ENCODE measurements at regions of chr12 and their contacts with region 1.

Region 1: GRCh38 chr12:11040162-11040561 is 9.0 kb upstream of the TAS2R31 start:
- DNase-seq: no peak
- H3K4me3 ChIP-seq: no peak overlapping the region
- H3K27ac ChIP-seq: no peak overlapping the region
- H3K4me1 ChIP-seq: peaks cover 0 to 4% (median 0%) of the 10 kb centered on the region in 4 donors
- H3K27me3 ChIP-seq: no peaks in the 10 kb centered on the region
- CTCF ChIP-seq: no peak
- EP300 ChIP-seq: no peak
- POLR2A ChIP-seq: no peak

Region 2: DNA sequence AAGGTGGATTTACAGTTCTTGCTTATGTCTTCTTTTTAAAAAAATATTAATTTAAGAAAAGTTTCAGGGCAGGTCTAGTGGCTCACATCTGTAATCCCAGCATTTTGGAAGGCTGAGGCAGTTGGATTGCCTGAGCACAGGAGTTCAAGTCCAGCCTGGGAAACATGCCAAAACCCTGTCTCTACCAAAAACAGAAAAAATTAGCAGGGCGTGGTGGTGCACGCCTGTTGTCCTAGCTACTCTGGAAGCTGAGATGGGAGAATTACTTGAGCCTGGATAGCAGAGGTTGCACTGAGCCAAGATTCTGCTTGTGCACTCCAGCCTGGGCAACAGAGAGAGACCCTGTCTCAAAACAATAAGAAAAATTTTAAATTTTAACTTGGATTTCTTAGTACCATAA is 27.4 kb after region 1 on chr12:
- intact Hi-C with region 1: loop called (anchors 1 kb)
- DNase-seq: no peak
- H3K4me3 ChIP-seq: no peak overlapping the region
- H3K27ac ChIP-seq: no peak overlapping the region
- H3K4me1 ChIP-seq: peaks cover 0 to 8% (median 6%) of the 10 kb centered on the region in 4 donors
- H3K27me3 ChIP-seq: no peaks in the 10 kb centered on the region
- CTCF ChIP-seq: no peak
- EP300 ChIP-seq: no peak
- POLR2A ChIP-seq: no peak

Region 3: DNA sequence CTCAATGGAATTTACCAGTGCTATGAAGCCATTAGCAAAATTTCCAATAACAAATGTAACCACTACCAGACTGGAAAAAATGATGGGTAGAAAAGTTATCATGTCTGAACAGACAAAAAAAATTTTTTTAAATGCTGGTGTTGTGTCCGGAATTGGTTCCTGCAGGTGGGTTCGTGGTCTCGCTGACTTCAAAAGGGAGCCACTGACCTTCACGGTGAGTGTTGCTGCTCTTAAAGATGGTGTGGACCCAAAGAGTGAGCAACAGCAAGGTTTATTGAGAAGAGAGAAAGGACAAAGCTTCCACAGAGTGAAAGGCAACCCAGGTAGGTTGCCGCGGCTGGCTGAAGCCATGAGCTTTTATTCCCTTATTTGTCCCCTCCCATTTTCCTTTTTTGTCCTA is 52.0 kb after region 1 on chr12 and contains the start of gene TAS2R43:
- intact Hi-C with region 1: loop called (anchors 2 kb)
- DNase-seq: no peak
- H3K4me3 ChIP-seq: no peak within 1 kb of the TSS
- H3K27ac ChIP-seq: no peak within 1 kb of the TSS
- H3K4me1 ChIP-seq: no peaks in the 10 kb centered on the region
- H3K27me3 ChIP-seq: no peaks in the 10 kb centered on the region
- CTCF ChIP-seq: no peak
- EP300 ChIP-seq: no peak
- POLR2A ChIP-seq: no peak
- total RNA-seq, gene TAS2R43: 0.39 to 1.3 (median 0.87) TPM

Region 4: DNA sequence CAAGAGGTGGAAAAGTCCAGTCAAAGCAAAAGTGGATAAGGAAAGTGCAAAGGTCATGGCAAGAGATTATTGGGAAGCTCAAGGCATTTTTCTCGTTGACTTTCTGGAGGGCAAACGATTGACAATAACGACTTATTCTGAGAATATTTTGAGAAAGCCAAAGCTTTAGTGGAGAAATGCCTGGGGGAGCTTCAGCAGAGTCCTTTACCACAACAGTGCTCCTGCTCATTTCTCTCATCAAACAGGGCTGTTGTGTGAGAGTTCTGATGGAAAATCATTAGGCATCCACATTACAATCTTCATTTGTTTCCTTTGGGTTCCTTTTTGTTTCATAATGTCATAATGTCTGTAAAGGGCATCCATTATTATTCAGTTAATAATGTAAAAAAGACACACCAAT is 202.5 kb after region 1 on chr12:
- intact Hi-C with region 1: no loop called
- DNase-seq: no peak
- H3K4me3 ChIP-seq: no peak overlapping the region
- H3K27ac ChIP-seq: no peak overlapping the region
- H3K4me1 ChIP-seq: no peaks in the 10 kb centered on the region
- H3K27me3 ChIP-seq: no peaks in the 10 kb centered on the region
- CTCF ChIP-seq: no peak
- EP300 ChIP-seq: no peak
- POLR2A ChIP-seq: no peak